WTC11 (cell line): ENCODE measurements at regions of chr9 and their contacts with region 1.

Region 1: DNA sequence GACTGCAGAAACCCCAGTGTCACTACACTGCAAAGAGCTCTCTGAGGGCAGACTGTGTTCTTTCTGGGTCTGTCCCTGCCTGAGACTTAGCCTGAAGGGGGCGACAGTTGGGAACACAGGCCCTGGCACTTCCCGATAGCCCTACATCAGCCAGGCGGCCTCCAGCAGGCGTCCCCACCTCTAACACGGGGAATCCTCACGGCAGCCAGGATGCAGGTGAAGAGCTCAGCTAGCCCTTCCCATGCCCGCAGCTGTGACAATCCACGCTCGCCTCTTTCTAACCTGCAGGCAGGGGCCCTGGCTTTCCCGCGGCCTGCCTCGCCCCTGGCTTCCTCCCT is 5.9 kb downstream of the MED22 start:
- DNase-seq: peak; percentile 75
- ATAC-seq: peak; percentile 84
- H3K4me3 Mint-ChIP-seq: no peak overlapping the region
- H3K27ac Mint-ChIP-seq: peak overlapping the region; percentile 58
- H3K4me1 Mint-ChIP-seq: peaks cover 13% of the 10 kb centered on the region
- H3K27me3 Mint-ChIP-seq: no peaks in the 10 kb centered on the region
- CTCF ChIP-seq: no peak

Region 2: GRCh38 chr9:133089271-133089671 is 252.8 kb before region 1 on chr9:
- CTCF ChIA-PET with region 1: no interaction called
- POLR2A ChIA-PET with region 1: no interaction called
- DNase-seq: no peak
- ATAC-seq: peak; percentile 51
- H3K4me3 Mint-ChIP-seq: no peak overlapping the region
- H3K27ac Mint-ChIP-seq: no peak overlapping the region
- H3K4me1 Mint-ChIP-seq: no peaks in the 10 kb centered on the region
- H3K27me3 Mint-ChIP-seq: no peaks in the 10 kb centered on the region
- CTCF ChIP-seq: no peak

Region 3: DNA sequence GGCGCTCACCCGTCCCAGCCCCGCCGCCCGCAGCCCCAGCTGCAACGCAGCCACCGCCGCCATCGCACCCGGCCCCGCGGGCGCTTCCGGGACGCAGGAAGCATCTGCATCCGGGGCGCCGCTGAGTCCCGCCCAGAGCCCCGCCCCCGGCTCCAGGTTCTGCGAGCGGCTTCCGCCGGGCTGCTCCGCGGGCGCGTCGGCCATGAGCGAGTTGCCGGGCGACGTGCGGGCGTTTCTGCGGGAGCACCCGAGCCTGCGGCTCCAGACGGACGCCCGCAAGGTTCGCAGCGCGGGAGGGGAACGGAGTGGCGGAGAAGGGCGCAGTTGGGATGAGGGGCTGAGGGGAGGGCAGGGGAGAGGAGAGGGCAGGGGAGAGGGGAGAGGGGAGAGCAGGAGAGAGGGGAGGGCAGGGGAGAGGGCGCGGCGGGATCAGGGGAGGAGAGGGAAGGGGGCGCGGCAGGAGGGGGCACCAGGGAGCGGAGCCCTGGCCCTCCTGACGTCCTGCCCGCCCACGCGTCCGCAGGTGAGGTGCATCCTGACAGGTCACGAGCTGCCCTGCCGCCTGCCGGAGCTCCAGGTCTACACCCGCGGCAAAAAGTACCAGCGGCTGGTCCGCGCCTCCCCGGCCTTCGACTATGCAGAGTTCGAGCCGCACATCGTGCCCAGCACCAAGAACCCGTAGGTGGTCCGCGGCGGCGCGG is 14.5 kb after region 1 on chr9 and contains the starts of genes SURF1 and SURF2:
- CTCF ChIA-PET with region 1: interaction called, 74 read pairs
- POLR2A ChIA-PET with region 1: interaction called, 6 read pairs
- DNase-seq: peak; percentile 89
- ATAC-seq: peak; percentile 38
- H3K4me3 Mint-ChIP-seq: peak within 1 kb of the TSS; percentile 90
- H3K27ac Mint-ChIP-seq: no peak within 1 kb of the TSS; the same call in 1 of the 2 replicates
- H3K4me1 Mint-ChIP-seq: peaks cover 17% of the 10 kb centered on the region
- H3K27me3 Mint-ChIP-seq: no peaks in the 10 kb centered on the region
- CTCF ChIP-seq: no peak
- total RNA-seq, gene SURF1: 33.3 to 36.4 TPM (median 35.6 TPM) in 3 replicates
- total RNA-seq, gene SURF2: 26.3 to 33.3 TPM (median 28.8 TPM) in 3 replicates

Region 4: DNA sequence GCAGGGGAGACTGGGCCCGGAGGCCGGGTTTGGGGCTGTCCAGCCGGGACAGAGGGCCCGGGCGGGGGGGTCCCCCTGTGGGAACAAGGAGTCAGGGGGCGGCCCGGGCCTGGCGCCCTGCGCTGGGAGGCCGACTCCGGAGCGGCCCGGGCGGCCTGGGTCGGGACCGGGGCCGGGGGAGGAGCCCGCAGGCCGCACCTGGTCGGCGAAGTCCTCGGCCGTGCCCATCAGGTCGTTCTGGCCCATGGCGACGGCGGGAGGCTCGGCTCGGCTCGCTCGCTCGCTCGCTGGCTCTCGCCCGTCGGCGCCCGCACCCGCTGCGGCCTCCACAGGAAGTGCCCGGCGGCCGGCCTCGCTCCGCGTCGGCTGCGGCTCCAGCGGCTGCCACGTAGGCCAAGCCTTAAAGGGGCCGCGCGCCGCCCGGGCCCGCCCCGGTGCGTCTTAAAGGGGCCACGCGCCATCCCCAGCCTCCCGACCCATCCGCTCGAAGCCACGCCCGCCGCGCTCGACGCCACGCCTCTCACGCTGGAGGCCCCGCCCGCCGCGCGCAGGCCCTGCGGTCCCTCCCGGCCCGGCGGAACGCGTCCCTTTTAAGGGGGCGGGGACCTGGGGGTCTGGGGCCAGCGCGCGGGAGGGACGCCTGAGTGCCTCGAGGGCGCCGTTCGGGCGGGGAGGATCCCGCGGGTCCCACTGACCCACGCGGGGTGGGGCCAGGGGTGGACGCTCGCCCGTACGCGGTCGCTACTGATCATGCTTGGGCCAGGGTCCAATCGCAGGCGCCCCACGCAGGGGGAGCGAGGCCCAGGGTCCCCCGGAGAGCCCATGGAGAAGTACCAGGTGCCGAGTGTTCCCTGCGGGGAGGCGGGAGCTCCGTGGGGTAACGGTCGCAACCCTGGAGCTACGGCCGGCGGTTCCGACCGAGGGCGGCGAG is 34.0 kb after region 1 on chr9 and contains the starts of genes STKLD1 and SURF4:
- CTCF ChIA-PET with region 1: interaction called, 11 read pairs
- POLR2A ChIA-PET with region 1: no interaction called
- DNase-seq: peak; percentile 96
- ATAC-seq: peak; percentile 92
- H3K4me3 Mint-ChIP-seq: peak within 1 kb of the TSS; percentile 98
- H3K27ac Mint-ChIP-seq: peak within 1 kb of the TSS; percentile 96
- H3K4me1 Mint-ChIP-seq: peaks cover 17% of the 10 kb centered on the region
- H3K27me3 Mint-ChIP-seq: peaks cover 30% of the 10 kb centered on the region
- CTCF ChIP-seq: no peak
- total RNA-seq, gene STKLD1: 0.94 to 1.6 TPM (median 0.98 TPM) in 3 replicates
- total RNA-seq, gene SURF4: 171 to 173 TPM (median 173 TPM) in 3 replicates

Region 5: DNA sequence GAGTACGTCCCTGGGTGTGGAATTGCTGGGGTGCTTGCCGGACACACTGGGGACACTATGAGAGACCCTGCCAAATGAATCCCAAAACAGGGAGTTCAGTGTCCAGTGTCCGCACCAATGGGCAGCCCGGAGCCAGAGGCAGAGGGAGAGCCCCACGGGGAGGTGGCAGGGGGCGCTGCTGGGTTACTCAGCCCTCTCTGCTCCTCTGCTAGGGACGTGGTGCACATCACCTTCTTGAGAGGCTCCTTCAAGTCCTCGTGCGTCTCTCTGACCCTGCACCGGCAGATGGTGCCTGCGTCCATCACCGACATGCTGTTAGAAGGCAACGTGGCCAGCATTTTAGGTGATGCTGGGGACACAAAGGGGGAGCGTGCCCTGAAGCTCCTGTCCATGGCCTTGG is 54.9 kb after region 1 on chr9:
- CTCF ChIA-PET with region 1: interaction called, 12 read pairs
- POLR2A ChIA-PET with region 1: no interaction called
- DNase-seq: peak; percentile 82
- ATAC-seq: peak; percentile 90
- H3K4me3 Mint-ChIP-seq: no peak overlapping the region
- H3K27ac Mint-ChIP-seq: no peak overlapping the region
- H3K4me1 Mint-ChIP-seq: no peaks in the 10 kb centered on the region
- H3K27me3 Mint-ChIP-seq: peaks cover 6% of the 10 kb centered on the region
- CTCF ChIP-seq: peak; percentile 24; the same call in 1 of the 2 replicates

Region 6: DNA sequence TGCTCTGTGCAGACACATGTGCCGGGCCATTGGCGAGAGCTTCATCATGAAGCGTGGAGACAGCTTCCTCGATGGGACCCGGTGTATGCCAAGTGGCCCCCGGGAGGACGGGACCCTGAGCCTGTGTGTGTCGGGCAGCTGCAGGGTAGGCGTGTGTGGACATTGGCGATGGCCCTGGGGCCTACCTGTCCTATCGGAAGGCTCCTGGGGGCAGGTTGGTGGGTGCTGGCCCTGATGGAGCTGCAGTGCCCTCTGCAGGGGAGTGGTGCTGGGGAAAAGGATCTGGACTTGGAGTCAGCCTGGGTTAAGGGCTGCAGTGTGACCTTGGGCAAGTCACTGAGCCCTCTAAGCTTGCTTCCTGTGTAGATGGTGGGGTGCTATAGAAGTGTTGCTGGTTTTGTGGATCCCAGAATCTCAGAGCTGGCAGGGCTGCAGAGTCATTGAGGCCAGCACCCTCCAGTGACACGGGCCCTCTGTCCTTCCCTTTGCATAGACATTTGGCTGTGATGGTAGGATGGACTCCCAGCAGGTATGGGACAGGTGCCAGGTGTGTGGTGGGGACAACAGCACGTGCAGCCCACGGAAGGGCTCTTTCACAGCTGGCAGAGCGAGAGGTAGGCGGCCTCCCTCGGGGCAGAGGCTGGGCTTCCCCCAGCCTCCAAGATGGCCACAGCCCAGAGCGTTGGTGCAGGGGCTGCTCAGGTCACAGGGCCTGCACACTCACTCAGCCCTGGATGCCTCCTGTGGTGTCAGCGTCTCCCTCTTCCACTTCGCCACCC is 95.9 kb after region 1 on chr9:
- CTCF ChIA-PET with region 1: interaction called, 10 read pairs
- POLR2A ChIA-PET with region 1: no interaction called
- DNase-seq: peak; percentile 63
- ATAC-seq: peak; percentile 82
- H3K4me3 Mint-ChIP-seq: no peak overlapping the region
- H3K27ac Mint-ChIP-seq: no peak overlapping the region
- H3K4me1 Mint-ChIP-seq: no peaks in the 10 kb centered on the region
- H3K27me3 Mint-ChIP-seq: no peaks in the 10 kb centered on the region
- CTCF ChIP-seq: no peak